Activated B cell treated with CpG ODN at 0.5 μM for 24 hours (primary cell): ENCODE measurements at regions of chrX and their contacts with region 1.

Region 1: DNA sequence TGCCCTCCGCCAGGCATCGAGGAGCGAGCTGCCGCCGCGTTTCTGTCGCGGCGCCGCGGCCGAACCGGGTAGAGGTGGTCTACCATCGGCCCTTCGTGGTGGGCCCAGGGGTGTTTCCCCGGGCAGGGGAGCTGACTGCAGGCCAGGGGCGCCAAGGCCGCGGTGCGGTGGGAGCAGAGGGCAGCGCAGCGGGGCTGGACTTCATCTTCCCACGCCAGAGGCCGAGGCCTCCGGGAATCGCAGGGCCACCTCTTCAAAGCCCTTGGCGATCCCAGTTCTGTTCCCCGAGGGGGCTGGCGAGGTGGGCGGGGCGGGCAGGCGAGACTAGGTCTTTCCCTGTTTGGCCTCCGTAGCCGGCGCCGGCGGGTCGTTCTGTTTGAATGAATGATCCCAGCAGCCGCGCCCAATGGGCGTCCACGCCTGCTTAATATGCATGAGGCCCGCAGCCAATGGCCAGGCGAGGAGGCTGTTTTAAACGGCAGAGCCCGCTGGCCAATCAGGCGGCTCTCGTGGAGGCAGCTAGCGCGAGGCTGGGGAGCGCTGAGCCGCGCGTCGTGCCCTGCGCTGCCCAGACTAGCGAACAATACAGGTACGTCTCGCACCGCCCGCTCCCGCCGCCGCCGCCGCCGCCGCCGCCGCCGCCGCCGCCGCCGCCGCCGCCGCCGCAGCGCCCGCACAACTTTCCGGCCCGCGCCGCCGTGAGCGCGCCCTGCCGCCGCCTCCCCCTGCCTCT is at the start of gene HMGB3:
- DNase-seq: peak; percentile 59
- ATAC-seq: peak; percentile 97
- H3K4me3 Mint-ChIP-seq: peak within 1 kb of the TSS; percentile 64
- H3K27ac Mint-ChIP-seq: no peak within 1 kb of the TSS
- H3K4me1 Mint-ChIP-seq: peaks cover 12% of the 10 kb centered on the region
- H3K27me3 Mint-ChIP-seq: peaks cover 11% of the 10 kb centered on the region
- CTCF ChIP-seq: no peak
- total RNA-seq, gene HMGB3: 1.7 and 2.5 TPM in 2 replicates

Region 2: DNA sequence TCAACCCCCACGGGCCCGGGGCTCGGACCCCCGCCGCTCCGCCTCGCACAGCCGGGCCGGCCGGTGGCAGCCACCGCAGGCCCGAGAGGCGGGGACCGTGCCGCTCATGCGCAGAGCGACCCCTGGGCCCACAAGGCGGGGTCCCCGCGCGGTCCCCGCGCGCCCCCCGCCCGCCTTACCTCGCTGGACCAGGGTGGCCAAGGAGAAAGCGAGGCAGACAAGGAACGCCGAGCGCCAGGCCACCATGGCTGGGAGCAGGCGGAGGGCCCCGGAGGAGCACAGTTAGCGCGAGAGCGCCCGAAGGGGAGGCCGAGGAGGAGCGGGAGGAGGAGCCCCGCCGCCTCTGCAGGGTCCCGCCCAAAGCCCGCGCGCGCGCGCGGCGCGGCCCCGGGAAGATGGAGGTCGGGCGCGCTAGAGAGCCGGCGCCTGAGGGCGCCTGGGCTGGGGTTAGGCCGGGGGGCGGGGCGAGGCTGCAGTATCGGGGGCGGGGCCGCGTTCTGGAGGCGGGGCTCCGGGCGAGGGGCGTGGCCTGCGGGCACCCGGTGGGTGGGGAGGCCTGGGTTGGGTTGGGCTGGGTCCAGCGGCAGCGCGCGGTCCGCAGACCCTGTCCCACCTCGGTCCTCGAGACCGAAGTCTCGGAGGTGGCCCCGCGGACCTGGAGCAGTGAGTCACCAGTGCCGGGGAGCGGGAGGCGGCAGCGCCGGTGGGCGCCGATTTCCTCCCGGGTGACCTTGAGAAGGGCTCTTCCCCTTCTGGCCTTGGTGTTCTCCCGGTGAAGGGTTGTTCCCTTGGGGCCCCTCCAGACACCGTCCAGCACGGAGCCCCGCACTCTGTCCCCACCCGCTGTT is 84.4 kb before region 1 on chrX and contains the start of gene CD99L2:
- CTCF ChIA-PET with region 1: no interaction called
- POLR2A ChIA-PET with region 1: no interaction called
- intact Hi-C with region 1: loop called (anchors 1 kb)
- DNase-seq: peak; percentile 84
- ATAC-seq: peak; percentile 91
- H3K4me3 Mint-ChIP-seq: peak within 1 kb of the TSS; percentile 90
- H3K27ac Mint-ChIP-seq: peak within 1 kb of the TSS; percentile 69
- H3K4me1 Mint-ChIP-seq: peaks cover 2% of the 10 kb centered on the region
- H3K27me3 Mint-ChIP-seq: peaks cover 6% of the 10 kb centered on the region
- CTCF ChIP-seq: no peak
- total RNA-seq, gene CD99L2: 12.5 and 12.7 TPM in 2 replicates